ENCODE measurements at regions of chr4 and their contacts with region 1.

Region 1: DNA sequence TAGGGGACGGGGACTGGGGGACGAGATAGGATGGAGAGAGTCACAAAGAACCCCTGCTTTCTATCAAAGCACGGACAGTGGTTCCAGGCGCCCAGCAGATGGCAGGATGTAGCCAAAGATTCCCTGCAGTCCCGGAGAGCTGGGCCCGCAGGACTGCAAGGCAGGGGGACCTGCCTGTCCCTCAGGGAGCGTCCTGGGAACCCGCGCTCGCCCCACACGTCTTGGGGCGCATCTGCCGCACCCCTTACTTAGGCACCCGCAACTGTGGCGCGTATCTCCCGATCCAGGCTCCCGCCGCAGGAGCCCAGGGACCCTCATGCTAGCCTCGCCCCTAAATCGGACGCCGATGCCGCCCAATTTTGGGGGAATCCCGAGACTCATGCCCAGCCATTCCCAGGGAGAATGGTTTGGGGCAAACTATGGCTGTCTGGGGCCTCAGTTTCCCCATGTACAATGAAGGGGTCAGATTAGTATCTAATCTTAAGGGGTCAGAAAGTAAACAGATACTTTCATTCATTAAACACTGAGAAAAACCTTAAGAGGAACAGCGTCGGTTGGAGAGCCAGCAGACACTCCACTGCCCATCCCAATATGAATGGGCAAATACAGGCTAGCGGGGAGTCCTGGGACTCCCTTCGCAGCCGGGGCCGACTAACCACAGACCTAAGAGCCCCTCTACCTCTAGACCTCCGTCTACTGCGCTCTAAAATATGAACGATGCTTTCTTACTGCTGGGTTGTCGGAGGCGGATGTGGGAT is 581 bp upstream of the STK32B start:
- DNase-seq: peak; percentile 88
- H3K4me3 ChIP-seq: peak overlapping the region; percentile 38 to 68
- H3K27ac ChIP-seq: no peak overlapping the region
- H3K4me1 ChIP-seq: peaks cover 0 to 12% of the 10 kb centered on the region in 2 experiments; a peak in 1 of 4 replicates
- H3K27me3 ChIP-seq: peaks cover 15% of the 10 kb centered on the region
- CTCF ChIP-seq: peak; percentile 72
- EP300 ChIP-seq: no peak
- RAD21 ChIP-seq: peak; percentile 79

Region 2: GRCh38 chr4:5785806-5786680 is 735.3 kb after region 1 on chr4:
- CTCF ChIA-PET with region 1: interaction called, 17 read pairs
- POLR2A ChIA-PET with region 1: no interaction called
- DNase-seq: no peak
- H3K4me3 ChIP-seq: no peak overlapping the region
- H3K27ac ChIP-seq: no peak overlapping the region
- H3K4me1 ChIP-seq: no peaks in the 10 kb centered on the region
- H3K27me3 ChIP-seq: no peaks in the 10 kb centered on the region
- CTCF ChIP-seq: no peak
- EP300 ChIP-seq: no peak
- RAD21 ChIP-seq: no peak